ENCODE measurements at regions of chr20 and their contacts with region 1.

Region 1: GRCh38 chr20:2172305-2173175 is 70.9 kb downstream of the STK35 start:
- DNase-seq: peak; percentile 64 to 80 (median 77)
- H3K4me3 ChIP-seq: no peak overlapping the region
- H3K27ac ChIP-seq: no peak overlapping the region
- H3K4me1 ChIP-seq: peaks cover 1% of the 10 kb centered on the region
- H3K27me3 ChIP-seq: no peaks in the 10 kb centered on the region
- CTCF ChIP-seq: peak; percentile 74 to 81 (median 77)
- EP300 ChIP-seq: no peak
- POLR2A ChIP-seq: no peak

Region 2: DNA sequence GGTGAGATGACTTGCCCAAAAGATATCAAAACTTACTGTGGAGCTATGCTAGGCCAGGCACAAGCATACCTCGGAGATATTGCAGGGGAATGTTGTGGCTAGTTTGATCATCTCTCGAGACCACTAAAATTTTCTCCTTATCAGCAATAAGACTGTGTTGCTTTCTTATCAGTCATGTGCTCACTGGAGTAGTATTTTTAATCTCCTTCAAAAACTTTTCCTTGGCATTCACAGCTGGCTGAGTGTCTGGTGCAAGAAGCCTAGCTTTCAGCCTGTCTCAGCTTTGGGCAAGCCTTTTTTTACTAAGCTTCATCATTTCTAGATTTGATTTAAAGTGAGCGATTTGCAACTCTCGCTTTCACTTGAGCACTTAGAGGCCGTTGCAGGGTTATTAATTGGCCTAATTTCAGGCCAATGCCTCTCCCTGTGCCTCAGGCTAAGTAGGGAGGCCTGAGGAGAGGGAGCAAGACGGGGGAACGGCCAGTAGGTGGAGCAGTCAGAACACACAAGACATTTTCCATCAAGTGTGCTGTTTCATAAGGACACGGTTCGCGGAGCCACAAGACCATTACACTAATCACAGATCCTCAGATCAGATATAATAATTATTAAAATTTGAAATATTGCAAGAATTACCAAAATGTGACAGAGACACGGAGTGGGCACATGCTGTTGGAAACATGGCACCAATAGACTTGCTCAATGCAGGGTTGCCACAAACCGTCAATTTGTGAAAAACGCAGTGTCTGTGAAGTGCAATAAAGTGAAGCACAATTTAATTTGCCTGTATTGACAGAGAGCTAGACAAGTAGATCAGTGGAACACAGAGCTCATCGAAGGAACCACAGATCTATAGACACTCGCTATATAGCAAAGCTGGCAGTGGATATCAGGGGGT is 408.2 kb before region 1 on chr20:
- intact Hi-C with region 1: loop called in 2 of 4 experiments (anchors 5 to 10 kb)
- DNase-seq: peak; percentile 68 to 80 (median 77)
- H3K4me3 ChIP-seq: no peak overlapping the region
- H3K27ac ChIP-seq: no peak overlapping the region
- H3K4me1 ChIP-seq: peaks cover 2% of the 10 kb centered on the region
- H3K27me3 ChIP-seq: no peaks in the 10 kb centered on the region
- CTCF ChIP-seq: peak; percentile 15 to 55 (median 38)
- EP300 ChIP-seq: no peak
- POLR2A ChIP-seq: no peak

Region 3: GRCh38 chr20:1965520-1966351 is 206.8 kb before region 1 on chr20:
- intact Hi-C with region 1: loop called (anchors 2 to 10 kb)
- DNase-seq: peak; percentile 67 to 83 (median 79)
- H3K4me3 ChIP-seq: no peak overlapping the region
- H3K27ac ChIP-seq: no peak overlapping the region
- H3K4me1 ChIP-seq: no peaks in the 10 kb centered on the region
- H3K27me3 ChIP-seq: no peaks in the 10 kb centered on the region
- CTCF ChIP-seq: peak; percentile 81 to 86 (median 83)
- EP300 ChIP-seq: no peak
- POLR2A ChIP-seq: no peak

Region 4: DNA sequence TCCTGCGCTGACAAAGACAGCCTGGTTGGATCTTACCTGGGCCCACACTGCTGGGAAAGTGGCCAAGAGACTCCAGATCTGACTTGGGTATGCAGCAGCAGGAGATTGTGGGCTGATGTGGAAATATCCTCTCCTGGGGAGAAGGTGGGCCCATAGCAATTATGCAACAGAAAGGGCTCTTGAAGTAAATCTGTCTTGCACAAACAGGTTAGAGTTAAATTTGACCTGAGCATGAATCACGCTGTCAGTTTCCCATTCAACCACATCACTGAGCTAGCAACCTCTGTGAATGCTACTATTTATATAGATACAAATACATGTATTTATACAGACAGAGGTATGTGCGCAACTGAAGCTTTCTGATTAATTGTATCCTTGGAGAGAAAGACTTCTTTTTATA is 150.4 kb before region 1 on chr20:
- intact Hi-C with region 1: no loop called
- DNase-seq: no peak
- H3K4me3 ChIP-seq: no peak overlapping the region
- H3K27ac ChIP-seq: no peak overlapping the region
- H3K4me1 ChIP-seq: no peaks in the 10 kb centered on the region
- H3K27me3 ChIP-seq: no peaks in the 10 kb centered on the region
- CTCF ChIP-seq: no peak
- EP300 ChIP-seq: no peak
- POLR2A ChIP-seq: no peak

Region 5: GRCh38 chr20:2086177-2086979 is 86.2 kb before region 1 on chr20:
- intact Hi-C with region 1: loop called in 2 of 4 experiments (anchors 10 kb)
- DNase-seq: no peak
- H3K4me3 ChIP-seq: no peak overlapping the region
- H3K27ac ChIP-seq: no peak overlapping the region
- H3K4me1 ChIP-seq: no peaks in the 10 kb centered on the region
- H3K27me3 ChIP-seq: no peaks in the 10 kb centered on the region
- CTCF ChIP-seq: no peak
- EP300 ChIP-seq: no peak
- POLR2A ChIP-seq: no peak

Measured in ovary (tissue), 10 donors.